HCT116 (cell line): ENCODE measurements at regions of chr9 and their contacts with region 1.

Region 1: DNA sequence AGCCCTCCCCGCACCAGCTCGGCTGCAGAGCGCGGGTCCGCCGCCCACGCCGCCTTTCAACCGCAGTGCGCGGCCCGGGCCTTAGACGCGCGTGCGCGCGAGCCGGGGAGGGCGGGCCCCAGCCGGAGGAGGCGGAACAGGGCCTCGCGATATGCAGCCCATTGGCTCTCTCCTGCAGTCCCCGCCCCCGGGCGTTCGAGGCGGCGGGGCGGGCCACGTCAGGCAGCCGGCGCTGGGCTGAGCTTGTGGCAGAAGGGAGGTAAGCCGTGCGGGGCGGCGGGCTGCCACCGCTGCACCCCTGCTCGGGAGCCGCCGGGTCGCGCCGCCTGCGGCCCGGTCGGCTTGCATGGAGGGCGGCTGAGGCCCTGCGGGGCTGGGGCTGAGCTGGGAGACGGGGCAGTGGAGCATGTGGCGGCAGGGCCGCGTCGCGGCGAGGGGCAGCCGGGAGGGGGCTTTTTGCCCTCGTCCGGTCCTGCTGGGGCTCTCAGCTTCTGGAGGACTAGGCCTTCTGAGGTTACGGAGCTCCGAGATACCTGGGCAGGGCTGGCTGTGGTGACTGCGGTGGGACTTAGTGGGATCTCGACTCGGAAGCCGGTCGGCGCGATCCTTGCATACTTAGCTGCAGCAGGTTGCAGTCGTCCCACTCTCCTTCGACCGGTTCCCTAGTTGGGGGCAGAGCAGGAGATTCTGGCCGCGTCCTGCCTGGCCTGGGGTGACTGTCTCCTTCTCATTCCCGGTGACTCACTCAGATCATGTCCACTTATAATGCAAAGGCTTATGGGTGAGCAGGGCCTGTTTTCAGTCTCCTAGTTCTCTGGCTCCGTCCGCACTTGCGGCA is at the start of gene FOCAD:
- DNase-seq: peak; percentile 78
- ATAC-seq: peak; percentile 98
- H3K4me3 ChIP-seq: peak within 1 kb of the TSS; percentile 68 to 87
- H3K27ac ChIP-seq: peak within 1 kb of the TSS; percentile 79
- H3K4me1 ChIP-seq: peaks cover 19 to 27% of the 10 kb centered on the region in 2 experiments
- H3K27me3 ChIP-seq: no peaks in the 10 kb centered on the region
- CTCF ChIP-seq: no peak
- POLR2A ChIP-seq: peak; percentile 93
- RAD21 ChIP-seq: no peak
- total RNA-seq, gene FOCAD: 40.7 TPM

Region 2: GRCh38 chr9:20622330-20623020 is 61.8 kb before region 1 on chr9 and contains the start of gene MLLT3:
- CTCF ChIA-PET with region 1: interaction called, 3 read pairs
- POLR2A ChIA-PET with region 1: interaction called, 7 read pairs
- RAD21 ChIA-PET with region 1: interaction called in 1 of 2 experiments, 4 read pairs
- intact Hi-C with region 1: loop called (anchors 2 kb)
- DNase-seq: peak; percentile 84
- ATAC-seq: peak; percentile 88
- H3K4me3 ChIP-seq: peak within 1 kb of the TSS; percentile 52 to 75
- H3K27ac ChIP-seq: peak within 1 kb of the TSS; percentile 66
- H3K4me1 ChIP-seq: peaks cover 0 to 23% of the 10 kb centered on the region in 2 experiments; a peak in 2 of 4 replicates
- H3K27me3 ChIP-seq: peaks cover 10% of the 10 kb centered on the region; the same call in 1 of the 2 replicates
- CTCF ChIP-seq: no peak
- POLR2A ChIP-seq: peak; percentile 24
- RAD21 ChIP-seq: no peak
- total RNA-seq, gene MLLT3: 4.3 TPM

Region 3: GRCh38 chr9:20658677-20659473 is 25.4 kb before region 1 on chr9:
- CTCF ChIA-PET with region 1: no interaction called
- POLR2A ChIA-PET with region 1: interaction called, 12 read pairs
- RAD21 ChIA-PET with region 1: interaction called in 1 of 2 experiments, 3 read pairs
- intact Hi-C with region 1: no loop called
- DNase-seq: no peak
- ATAC-seq: peak; percentile 81
- H3K4me3 ChIP-seq: peak overlapping the region; percentile 48 to 62
- H3K27ac ChIP-seq: peak overlapping the region; percentile 68
- H3K4me1 ChIP-seq: peaks cover 0 to 11% of the 10 kb centered on the region in 2 experiments; a peak in 1 of 4 replicates
- H3K27me3 ChIP-seq: no peaks in the 10 kb centered on the region
- CTCF ChIP-seq: no peak
- POLR2A ChIP-seq: no peak
- RAD21 ChIP-seq: no peak

Region 4: GRCh38 chr9:20671635-20672034 is 12.6 kb before region 1 on chr9:
- CTCF ChIA-PET with region 1: no interaction called
- POLR2A ChIA-PET with region 1: interaction called, 10 read pairs
- RAD21 ChIA-PET with region 1: no interaction called
- intact Hi-C with region 1: no loop called
- DNase-seq: no peak
- ATAC-seq: no peak
- H3K4me3 ChIP-seq: no peak overlapping the region
- H3K27ac ChIP-seq: no peak overlapping the region
- H3K4me1 ChIP-seq: no peaks in the 10 kb centered on the region
- H3K27me3 ChIP-seq: no peaks in the 10 kb centered on the region
- CTCF ChIP-seq: no peak
- POLR2A ChIP-seq: no peak
- RAD21 ChIP-seq: no peak

Region 5: DNA sequence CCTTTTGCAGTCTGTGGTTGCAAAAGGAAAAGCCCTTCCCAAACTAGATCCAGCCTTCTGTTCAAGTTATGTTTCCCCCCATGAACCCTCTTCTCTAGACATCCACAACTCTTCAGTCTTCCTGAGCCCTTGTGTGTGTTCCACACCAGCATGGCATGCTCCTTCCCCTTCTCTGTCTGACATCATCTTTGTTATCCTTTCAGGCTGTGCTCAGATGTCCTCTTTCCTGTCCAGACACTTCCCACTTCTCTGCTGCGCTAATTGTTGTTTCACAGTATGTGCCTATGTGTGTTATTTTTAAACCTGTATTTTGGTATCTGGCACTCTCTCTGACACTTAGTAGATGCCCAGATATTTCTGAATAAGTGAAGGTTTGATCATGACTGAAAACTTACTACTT is 38.0 kb after region 1 on chr9:
- CTCF ChIA-PET with region 1: no interaction called
- POLR2A ChIA-PET with region 1: no interaction called
- RAD21 ChIA-PET with region 1: no interaction called
- intact Hi-C with region 1: no loop called
- DNase-seq: no peak
- ATAC-seq: no peak
- H3K4me3 ChIP-seq: no peak overlapping the region
- H3K27ac ChIP-seq: no peak overlapping the region
- H3K4me1 ChIP-seq: peaks cover 8 to 15% of the 10 kb centered on the region in 2 experiments; a peak in 3 of 4 replicates
- H3K27me3 ChIP-seq: no peaks in the 10 kb centered on the region
- CTCF ChIP-seq: no peak
- POLR2A ChIP-seq: no peak
- RAD21 ChIP-seq: no peak